ENCODE measurements at regions of chr11 and their contacts with region 1.

Region 1: DNA sequence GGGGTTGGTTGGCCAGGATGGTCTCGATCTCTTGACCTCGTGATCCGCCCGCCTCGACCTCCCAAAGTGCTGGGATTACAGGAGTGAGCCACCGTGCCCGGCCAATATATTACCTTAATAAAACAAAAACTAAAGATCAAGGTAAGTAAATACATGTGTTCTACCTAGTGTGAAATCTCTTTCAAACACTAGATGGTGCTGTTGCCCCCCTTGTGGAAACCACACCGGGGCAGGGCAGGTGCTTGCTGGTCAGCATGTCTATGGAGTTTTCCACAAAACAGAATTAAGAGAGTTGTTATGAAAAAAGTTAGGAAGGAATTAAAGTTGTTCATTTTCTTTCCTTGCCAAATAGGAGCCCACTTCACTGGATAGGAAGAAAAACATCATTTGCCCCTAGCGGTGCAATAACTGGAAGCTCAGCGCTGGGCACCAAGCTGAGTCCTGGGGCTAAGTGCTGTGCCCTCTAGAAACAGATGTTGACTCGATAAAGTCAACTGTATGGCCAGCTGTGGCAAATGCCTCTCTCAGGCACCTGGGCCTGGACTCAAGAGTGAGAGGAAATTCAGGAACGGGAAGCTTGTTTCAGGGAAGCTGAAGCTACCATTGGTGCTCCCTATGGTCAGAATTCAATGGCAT is 6.3 kb upstream of the KCNJ5 start:
- DNase-seq: peak; percentile 63
- H3K4me3 Mint-ChIP-seq: no peak overlapping the region
- H3K27ac Mint-ChIP-seq: no peak overlapping the region
- H3K4me1 Mint-ChIP-seq: peaks cover 9% of the 10 kb centered on the region
- H3K27me3 Mint-ChIP-seq: peaks cover 58% of the 10 kb centered on the region

Region 2: DNA sequence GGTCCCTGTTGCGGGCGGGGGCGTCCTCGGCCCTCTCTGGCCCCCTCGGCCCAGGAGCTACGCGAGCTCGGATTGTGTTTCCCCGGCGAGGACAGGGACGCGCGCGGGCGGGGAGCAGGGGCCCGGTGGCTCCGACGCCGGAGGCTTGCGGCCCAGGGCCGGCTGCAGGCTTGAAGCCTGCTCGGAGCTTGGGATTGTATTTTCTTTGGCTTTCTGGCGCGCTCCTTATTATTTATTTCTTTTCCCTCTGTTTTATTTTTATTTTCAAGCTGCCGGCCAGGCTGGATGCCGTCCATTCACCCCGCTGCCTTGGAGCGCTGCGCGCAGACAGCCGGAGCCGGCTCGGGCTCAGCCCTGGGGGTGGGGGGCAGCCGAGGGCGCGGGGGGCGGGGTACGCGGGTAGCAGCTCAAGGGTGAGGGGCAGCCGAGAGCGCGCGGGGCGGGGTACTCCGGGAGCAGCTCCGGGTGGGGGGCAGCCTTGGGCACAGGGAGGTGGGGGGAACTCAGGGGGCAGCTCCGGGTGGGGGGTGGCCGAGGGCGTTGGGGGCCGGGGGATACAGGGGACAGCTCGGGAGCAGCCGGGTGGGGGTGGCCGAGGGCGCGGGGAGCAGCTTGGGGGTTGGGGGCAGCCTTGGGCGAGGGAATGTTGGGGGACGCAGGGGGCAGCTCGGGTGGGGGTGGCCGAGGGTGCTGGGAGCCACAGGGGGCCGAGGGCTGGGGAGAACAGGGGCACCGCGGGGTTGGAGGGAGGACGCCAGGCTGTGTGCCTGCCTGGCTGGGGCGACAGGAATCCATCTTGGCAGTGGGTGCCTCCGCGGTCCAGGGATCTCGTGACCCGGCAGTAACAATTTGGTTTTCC is 60.4 kb before region 1 on chr11:
- CTCF ChIA-PET with region 1: no interaction called
- POLR2A ChIA-PET with region 1: no interaction called
- DNase-seq: no peak
- H3K4me3 Mint-ChIP-seq: no peak overlapping the region
- H3K27ac Mint-ChIP-seq: no peak overlapping the region
- H3K4me1 Mint-ChIP-seq: no peaks in the 10 kb centered on the region
- H3K27me3 Mint-ChIP-seq: no peaks in the 10 kb centered on the region

Region 3: DNA sequence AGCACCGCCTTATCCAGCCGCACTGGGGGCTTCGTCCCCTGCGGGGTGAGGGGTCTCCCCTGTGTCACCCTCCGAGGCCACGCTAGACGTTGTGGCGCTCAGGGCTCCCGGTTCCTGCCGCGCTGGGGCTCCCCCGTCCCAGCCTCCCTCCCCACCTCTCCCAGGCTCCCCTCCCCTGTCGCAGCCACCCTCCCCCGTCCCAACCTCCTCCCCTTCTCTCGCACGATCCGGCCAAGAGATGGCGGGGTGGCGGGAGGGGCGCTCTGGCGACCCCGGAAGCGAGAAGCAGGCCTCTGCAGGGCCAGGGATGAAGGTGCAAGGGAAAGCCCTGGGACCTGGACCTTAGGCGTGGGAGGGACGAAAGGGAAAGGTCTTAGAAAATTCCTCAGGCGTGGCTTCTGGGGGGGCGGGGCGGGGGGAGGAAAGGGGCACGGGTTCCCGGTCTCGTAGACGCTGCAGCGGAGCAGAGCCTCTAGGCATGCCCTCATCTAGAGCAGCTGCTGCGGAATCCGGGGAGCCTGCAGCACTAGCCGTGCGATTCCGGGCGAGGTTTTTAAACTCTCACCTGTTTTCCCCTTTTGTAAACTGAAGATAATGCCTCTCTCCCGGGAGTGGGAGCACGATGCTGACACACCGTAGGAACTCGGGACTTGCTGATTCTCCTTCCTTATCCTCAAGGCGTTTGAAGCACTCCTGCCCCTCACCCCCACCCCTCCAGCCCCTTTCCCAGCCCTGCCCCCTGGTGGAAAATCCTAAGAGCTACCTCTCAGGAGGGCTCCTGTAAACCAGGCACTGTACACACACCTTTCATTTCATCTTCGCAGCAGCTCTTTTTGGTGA is 20.7 kb after region 1 on chr11:
- CTCF ChIA-PET with region 1: interaction called, 59 read pairs
- POLR2A ChIA-PET with region 1: no interaction called
- DNase-seq: peak; percentile 34
- H3K4me3 Mint-ChIP-seq: peak overlapping the region; percentile 56
- H3K27ac Mint-ChIP-seq: no peak overlapping the region
- H3K4me1 Mint-ChIP-seq: peaks cover 14% of the 10 kb centered on the region
- H3K27me3 Mint-ChIP-seq: peaks cover 64% of the 10 kb centered on the region

Region 4: GRCh38 chr11:128917144-128917724 is 32.4 kb after region 1 on chr11:
- CTCF ChIA-PET with region 1: no interaction called
- POLR2A ChIA-PET with region 1: no interaction called
- DNase-seq: no peak
- H3K4me3 Mint-ChIP-seq: no peak overlapping the region
- H3K27ac Mint-ChIP-seq: no peak overlapping the region
- H3K4me1 Mint-ChIP-seq: peaks cover 3% of the 10 kb centered on the region
- H3K27me3 Mint-ChIP-seq: peaks cover 14% of the 10 kb centered on the region

Region 5: GRCh38 chr11:128948589-128948988 is 63.8 kb after region 1 on chr11:
- CTCF ChIA-PET with region 1: interaction called, 164 read pairs
- POLR2A ChIA-PET with region 1: interaction called, 3 read pairs
- DNase-seq: no peak
- H3K4me3 Mint-ChIP-seq: no peak overlapping the region
- H3K27ac Mint-ChIP-seq: no peak overlapping the region
- H3K4me1 Mint-ChIP-seq: no peaks in the 10 kb centered on the region
- H3K27me3 Mint-ChIP-seq: peaks cover 22% of the 10 kb centered on the region

Region 6: GRCh38 chr11:128956401-128957201 is 71.8 kb after region 1 on chr11:
- CTCF ChIA-PET with region 1: interaction called, 164 read pairs
- POLR2A ChIA-PET with region 1: interaction called, 10 read pairs
- DNase-seq: no peak
- H3K4me3 Mint-ChIP-seq: no peak overlapping the region
- H3K27ac Mint-ChIP-seq: no peak overlapping the region
- H3K4me1 Mint-ChIP-seq: peaks cover 3% of the 10 kb centered on the region
- H3K27me3 Mint-ChIP-seq: peaks cover 39% of the 10 kb centered on the region

Region 7: GRCh38 chr11:129013737-129014475 is 129.1 kb after region 1 on chr11:
- CTCF ChIA-PET with region 1: no interaction called
- POLR2A ChIA-PET with region 1: no interaction called
- DNase-seq: no peak
- H3K4me3 Mint-ChIP-seq: no peak overlapping the region
- H3K27ac Mint-ChIP-seq: no peak overlapping the region
- H3K4me1 Mint-ChIP-seq: no peaks in the 10 kb centered on the region
- H3K27me3 Mint-ChIP-seq: peaks cover 3% of the 10 kb centered on the region

Region 8: GRCh38 chr11:129048911-129049310 is 164.1 kb after region 1 on chr11:
- CTCF ChIA-PET with region 1: no interaction called
- POLR2A ChIA-PET with region 1: no interaction called
- DNase-seq: no peak
- H3K4me3 Mint-ChIP-seq: no peak overlapping the region
- H3K27ac Mint-ChIP-seq: no peak overlapping the region
- H3K4me1 Mint-ChIP-seq: no peaks in the 10 kb centered on the region
- H3K27me3 Mint-ChIP-seq: peaks cover 5% of the 10 kb centered on the region